ENCODE measurements at regions of chr12 and their contacts with region 1.

Region 1: DNA sequence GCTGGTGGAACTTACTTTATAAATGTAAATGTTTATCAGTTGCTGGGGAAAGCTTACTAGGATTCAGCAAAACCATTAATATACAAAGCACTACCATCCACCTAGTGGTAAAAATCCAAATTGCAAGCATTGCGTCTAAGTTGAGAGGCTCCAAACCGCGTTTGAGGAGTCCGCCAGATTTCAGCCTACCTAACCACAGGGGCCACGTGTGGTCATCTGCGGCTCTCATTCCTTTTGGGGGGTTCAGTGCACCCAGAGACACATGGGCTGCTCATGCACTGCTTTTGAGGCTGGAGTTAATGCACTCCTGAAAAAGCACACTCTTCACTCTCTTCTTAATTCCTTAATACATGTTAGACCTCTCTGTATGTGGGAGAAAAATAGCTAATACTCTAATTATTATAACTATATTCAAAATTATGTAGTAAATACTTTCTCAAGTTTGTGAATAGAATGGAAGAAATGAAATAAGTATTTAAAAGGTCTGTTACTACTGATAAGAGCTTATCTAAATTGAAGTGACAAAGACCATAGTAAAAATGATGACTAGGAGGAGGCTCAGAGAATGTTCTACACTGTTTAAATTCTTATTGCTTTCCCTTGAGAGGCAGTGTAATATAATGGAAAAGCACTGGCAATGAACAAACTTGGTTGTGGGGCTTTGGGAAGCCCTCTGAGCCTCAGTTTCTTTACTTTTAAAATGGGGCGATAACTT is 41.4 kb upstream of the MANSC4 start:
- DNase-seq: peak in 1 of 2 donors; percentile 12
- ATAC-seq: peak; percentile 73 to 77
- H3K4me3 ChIP-seq: no peak overlapping the region
- H3K27ac ChIP-seq: no peak overlapping the region
- H3K4me1 ChIP-seq: no peaks in the 10 kb centered on the region
- H3K27me3 ChIP-seq: no peaks in the 10 kb centered on the region
- CTCF ChIP-seq: peak; percentile 53 to 77 (median 59)
- POLR2A ChIP-seq: no peak

Region 2: DNA sequence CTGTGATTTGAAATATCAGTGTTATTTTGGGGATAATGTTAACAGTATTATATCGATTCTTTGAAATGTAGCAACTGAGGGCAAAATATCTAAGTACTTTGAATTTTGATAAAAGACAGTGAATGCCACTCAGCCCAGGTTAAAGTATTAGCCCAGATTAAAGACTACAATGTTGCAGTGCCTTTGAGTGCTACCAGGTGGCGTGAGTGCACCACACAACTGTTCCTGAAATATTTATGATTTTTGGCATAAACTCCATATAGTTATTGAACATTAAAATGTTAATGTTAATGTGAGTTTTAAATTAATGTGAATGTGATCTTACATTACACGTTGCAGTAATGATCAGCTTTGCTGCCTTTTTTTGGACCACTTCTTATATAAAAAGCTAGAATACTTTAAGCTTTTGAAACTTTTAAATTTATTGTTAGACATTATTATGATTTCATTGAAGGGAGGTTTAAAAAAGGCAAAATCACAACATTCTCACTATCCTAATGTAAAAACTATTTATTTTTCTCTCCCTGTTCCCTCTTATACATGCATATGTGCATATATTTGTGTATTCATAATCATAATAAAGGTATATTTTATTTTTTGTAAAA is 88.3 kb before region 1 on chr12:
- in situ Hi-C with region 1: no loop called
- intact Hi-C with region 1: loop called (anchors 5 kb)
- DNase-seq: no peak
- ATAC-seq: no peak
- H3K4me3 ChIP-seq: no peak overlapping the region
- H3K27ac ChIP-seq: no peak overlapping the region
- H3K4me1 ChIP-seq: no peaks in the 10 kb centered on the region
- H3K27me3 ChIP-seq: no peaks in the 10 kb centered on the region
- CTCF ChIP-seq: peak; percentile 38 to 67 (median 51)
- POLR2A ChIP-seq: no peak

Measured in gastrocnemius medialis (tissue), 4 donors.